ENCODE measurements at regions of chr2 and their contacts with region 1.

Region 1: GRCh38 chr2:218710687-218711549 is at the start of gene TTLL4:
- DNase-seq: peak; percentile 99
- ATAC-seq: peak; percentile 98
- H3K4me3 ChIP-seq: peak within 1 kb of the TSS; percentile 71 to 94 (median 79)
- H3K4me3 Mint-ChIP-seq: peak within 1 kb of the TSS; percentile 95
- H3K27ac ChIP-seq: peak within 1 kb of the TSS; percentile 64 to 96
- H3K27ac Mint-ChIP-seq: peak within 1 kb of the TSS; percentile 90
- H3K4me1 ChIP-seq: peaks cover 18 to 21% of the 10 kb centered on the region in 2 donors
- H3K4me1 Mint-ChIP-seq: peaks cover 26% of the 10 kb centered on the region
- H3K27me3 ChIP-seq: peaks cover 0 to 2% (median 0%) of the 10 kb centered on the region in 4 experiments
- H3K27me3 Mint-ChIP-seq: peaks cover 3% of the 10 kb centered on the region
- CTCF ChIP-seq: peak; percentile 84
- total RNA-seq, gene TTLL4: 30.6 and 33.8 TPM in 2 replicates

Region 2: GRCh38 chr2:218216674-218217359 is 494.1 kb before region 1 on chr2 and contains the start of gene ARPC2:
- CTCF ChIA-PET with region 1: no interaction called
- POLR2A ChIA-PET with region 1: no interaction called
- intact Hi-C with region 1: loop called (anchors 2 kb)
- DNase-seq: peak; percentile 98
- ATAC-seq: peak; percentile 74
- H3K4me3 ChIP-seq: peak within 1 kb of the TSS; percentile 93 to 99 (median 97)
- H3K4me3 Mint-ChIP-seq: peak within 1 kb of the TSS; percentile 90
- H3K27ac ChIP-seq: peak within 1 kb of the TSS; percentile 95 to 99
- H3K27ac Mint-ChIP-seq: peak within 1 kb of the TSS; percentile 94
- H3K4me1 ChIP-seq: peaks cover 36 to 45% of the 10 kb centered on the region in 2 donors
- H3K4me1 Mint-ChIP-seq: peaks cover 43% of the 10 kb centered on the region
- H3K27me3 ChIP-seq: no peaks in the 10 kb centered on the region
- H3K27me3 Mint-ChIP-seq: no peaks in the 10 kb centered on the region
- CTCF ChIP-seq: no peak
- total RNA-seq, gene ARPC2: 343 and 352 TPM in 2 replicates

Region 3: GRCh38 chr2:218568190-218569037 is 142.5 kb before region 1 on chr2 and contains the starts of genes CNOT9 and USP37:
- CTCF ChIA-PET with region 1: no interaction called
- POLR2A ChIA-PET with region 1: no interaction called
- intact Hi-C with region 1: loop called (anchors 1 kb)
- DNase-seq: peak; percentile 100
- ATAC-seq: peak; percentile 92
- H3K4me3 ChIP-seq: peak within 1 kb of the TSS; percentile 65 to 91 (median 84)
- H3K4me3 Mint-ChIP-seq: peak within 1 kb of the TSS; percentile 96
- H3K27ac ChIP-seq: peak within 1 kb of the TSS; percentile 93 to 95
- H3K27ac Mint-ChIP-seq: peak within 1 kb of the TSS; percentile 100
- H3K4me1 ChIP-seq: peaks cover 29 to 31% of the 10 kb centered on the region in 2 donors
- H3K4me1 Mint-ChIP-seq: peaks cover 56% of the 10 kb centered on the region
- H3K27me3 ChIP-seq: no peaks in the 10 kb centered on the region
- H3K27me3 Mint-ChIP-seq: no peaks in the 10 kb centered on the region
- CTCF ChIP-seq: no peak
- total RNA-seq, gene CNOT9: 54.5 and 66.9 TPM in 2 replicates
- total RNA-seq, gene USP37: 29.0 and 32.4 TPM in 2 replicates

Region 4: DNA sequence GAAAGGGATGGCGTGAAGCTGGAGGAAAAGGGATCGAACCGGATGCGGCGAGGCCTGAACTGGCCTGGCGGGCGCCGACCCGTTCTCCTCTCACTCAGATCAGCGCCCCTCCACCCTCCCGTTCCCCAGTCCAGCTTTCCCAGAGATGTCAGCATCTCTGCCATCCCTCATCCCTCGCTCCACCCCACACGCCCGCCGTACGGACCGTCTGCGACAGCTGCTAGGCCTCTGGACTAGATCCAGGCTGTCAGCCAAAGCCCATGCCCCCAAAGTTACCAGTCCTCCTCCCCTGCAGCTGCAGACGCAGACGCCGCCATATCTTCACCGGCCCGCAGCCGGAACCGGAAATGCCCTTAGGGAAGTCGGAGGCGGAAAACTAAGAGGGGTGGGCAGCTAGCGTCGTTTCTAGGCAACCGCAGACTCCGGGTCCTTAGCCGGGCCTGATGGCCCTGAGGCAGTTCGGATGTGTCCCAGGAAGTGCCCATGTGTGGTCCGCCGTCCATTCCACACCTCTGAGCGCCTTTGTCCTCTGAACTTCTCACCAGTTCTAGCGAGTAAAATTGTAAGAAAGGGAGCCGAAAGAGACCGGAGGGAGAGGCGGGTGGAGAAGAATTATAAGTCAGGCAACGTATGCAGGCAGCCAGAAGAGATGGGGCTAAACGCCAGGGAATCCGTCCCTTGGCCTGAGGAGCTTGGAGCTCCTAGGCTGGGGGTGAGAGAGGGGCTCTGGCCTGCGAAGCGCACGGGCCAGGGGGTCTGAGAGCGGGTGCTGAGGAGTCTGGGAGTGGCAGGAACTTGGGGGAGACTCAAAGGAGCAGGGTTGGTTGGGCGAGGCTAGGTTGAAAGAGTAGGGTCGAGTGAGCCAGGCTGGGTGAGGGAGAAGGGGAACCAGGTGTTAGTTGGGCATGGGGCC is 39.0 kb before region 1 on chr2 and contains the starts of genes RNF25 and STK36:
- CTCF ChIA-PET with region 1: interaction called, 10 read pairs
- POLR2A ChIA-PET with region 1: interaction called, 4 read pairs
- intact Hi-C with region 1: loop called (anchors 1 kb)
- DNase-seq: peak; percentile 85
- ATAC-seq: peak; percentile 95
- H3K4me3 ChIP-seq: peak within 1 kb of the TSS; percentile 66 to 96 (median 84)
- H3K4me3 Mint-ChIP-seq: peak within 1 kb of the TSS; percentile 97
- H3K27ac ChIP-seq: peak within 1 kb of the TSS; percentile 8 to 84
- H3K27ac Mint-ChIP-seq: peak within 1 kb of the TSS; percentile 91
- H3K4me1 ChIP-seq: peaks cover 14 to 15% of the 10 kb centered on the region in 2 donors
- H3K4me1 Mint-ChIP-seq: peaks cover 20% of the 10 kb centered on the region
- H3K27me3 ChIP-seq: no peaks in the 10 kb centered on the region
- H3K27me3 Mint-ChIP-seq: no peaks in the 10 kb centered on the region
- CTCF ChIP-seq: no peak
- total RNA-seq, gene RNF25: 31.7 and 31.8 TPM in 2 replicates
- total RNA-seq, gene STK36: 41.3 and 42.9 TPM in 2 replicates

Region 5: GRCh38 chr2:218876562-218877219 is 165.8 kb after region 1 on chr2:
- CTCF ChIA-PET with region 1: interaction called, 17 read pairs
- POLR2A ChIA-PET with region 1: no interaction called
- intact Hi-C with region 1: loop called (anchors 10 kb)
- DNase-seq: peak; percentile 87
- ATAC-seq: no peak
- H3K4me3 ChIP-seq: no peak overlapping the region
- H3K4me3 Mint-ChIP-seq: peak overlapping the region; percentile 2
- H3K27ac ChIP-seq: no peak overlapping the region
- H3K27ac Mint-ChIP-seq: peak overlapping the region; percentile 23
- H3K4me1 ChIP-seq: peaks cover 54 to 70% of the 10 kb centered on the region in 2 donors
- H3K4me1 Mint-ChIP-seq: peaks cover 59% of the 10 kb centered on the region
- H3K27me3 ChIP-seq: peaks cover 0 to 40% (median 17%) of the 10 kb centered on the region in 4 experiments
- H3K27me3 Mint-ChIP-seq: peaks cover 19% of the 10 kb centered on the region
- CTCF ChIP-seq: peak; percentile 94

Region 6: GRCh38 chr2:219002395-219003266 is 291.7 kb after region 1 on chr2:
- CTCF ChIA-PET with region 1: no interaction called
- POLR2A ChIA-PET with region 1: interaction called, 12 read pairs
- intact Hi-C with region 1: no loop called
- DNase-seq: peak; percentile 59
- ATAC-seq: peak; percentile 51
- H3K4me3 ChIP-seq: peak overlapping the region in 3 of 5 experiments; percentile 17 to 39 (median 35)
- H3K4me3 Mint-ChIP-seq: peak overlapping the region; percentile 83
- H3K27ac ChIP-seq: no peak overlapping the region
- H3K27ac Mint-ChIP-seq: no peak overlapping the region
- H3K4me1 ChIP-seq: peaks cover 25 to 37% of the 10 kb centered on the region in 2 donors
- H3K4me1 Mint-ChIP-seq: peaks cover 22% of the 10 kb centered on the region
- H3K27me3 ChIP-seq: peaks cover 0 to 83% (median 32%) of the 10 kb centered on the region in 4 experiments
- H3K27me3 Mint-ChIP-seq: peaks cover 59% of the 10 kb centered on the region
- CTCF ChIP-seq: no peak

Measured in B cell (primary cell).